Colonic mucosa (tissue), 4 donors: ENCODE measurements at regions of chr11 and their contacts with region 1.

Region 1: DNA sequence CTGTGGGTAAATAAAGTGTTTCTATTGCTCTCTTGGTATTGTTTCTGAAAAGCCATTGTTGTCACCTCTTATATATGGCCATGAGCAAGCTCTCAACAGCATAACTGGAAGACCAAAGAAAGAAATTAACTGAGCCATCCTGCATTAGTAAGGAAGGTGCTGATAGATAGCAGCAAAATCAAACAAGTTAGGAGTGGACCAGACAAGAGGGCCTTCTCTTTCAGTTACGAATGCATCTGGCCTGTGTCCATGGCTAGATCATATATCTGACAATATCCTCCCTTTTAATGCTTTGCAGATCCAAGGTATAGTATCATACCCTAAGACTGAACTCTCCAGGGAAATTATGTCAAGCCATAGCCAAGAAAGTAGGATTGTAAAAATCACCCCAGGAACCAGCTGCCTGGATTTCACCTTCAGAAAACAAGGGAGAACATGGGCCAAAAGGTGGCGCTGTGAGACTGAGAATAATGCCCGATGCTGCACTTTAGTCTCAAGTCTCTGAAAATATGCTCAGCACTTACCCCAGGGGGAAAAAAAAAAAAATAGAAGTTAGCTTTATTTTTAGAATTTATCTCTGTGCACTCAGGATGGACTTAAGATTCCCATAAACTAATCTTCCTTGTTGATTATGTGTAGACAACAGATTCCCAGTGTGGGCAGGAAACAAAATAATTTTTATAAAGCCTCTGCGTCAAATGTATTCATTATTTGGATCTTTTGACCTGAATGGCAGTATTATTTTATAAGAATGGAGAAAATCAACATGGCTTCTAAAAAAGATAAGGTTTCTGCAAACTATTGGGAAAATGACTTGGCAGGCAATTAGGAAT is 415.1 kb downstream of the ETS1 start:
- DNase-seq: peak; percentile 81
- H3K4me3 ChIP-seq: no peak overlapping the region
- H3K27ac ChIP-seq: no peak overlapping the region
- H3K4me1 ChIP-seq: no peaks in the 10 kb centered on the region
- H3K27me3 ChIP-seq: no peaks in the 10 kb centered on the region
- CTCF ChIP-seq: peak; percentile 62

Region 2: GRCh38 chr11:128279866-128280265 is 107.6 kb after region 1 on chr11:
- intact Hi-C with region 1: loop called (anchors 10 kb)
- DNase-seq: no peak
- H3K4me3 ChIP-seq: no peak overlapping the region
- H3K27ac ChIP-seq: no peak overlapping the region
- H3K4me1 ChIP-seq: no peaks in the 10 kb centered on the region
- H3K27me3 ChIP-seq: no peaks in the 10 kb centered on the region
- CTCF ChIP-seq: no peak

Region 3: GRCh38 chr11:128630367-128631230 is 458.3 kb after region 1 on chr11:
- intact Hi-C with region 1: loop called (anchors 2 kb)
- DNase-seq: peak; percentile 93
- H3K4me3 ChIP-seq: no peak overlapping the region
- H3K27ac ChIP-seq: no peak overlapping the region
- H3K4me1 ChIP-seq: no peaks in the 10 kb centered on the region
- H3K27me3 ChIP-seq: no peaks in the 10 kb centered on the region
- CTCF ChIP-seq: peak; percentile 92